Caco-2 (cell line): ENCODE measurements at regions of chr15 and their contacts with region 1.

Region 1: GRCh38 chr15:78565097-78565951 is at the start of gene CHRNA5:
- DNase-seq: peak; percentile 85 to 92
- H3K4me3 ChIP-seq: peak within 1 kb of the TSS; percentile 64
- H3K4me3 Mint-ChIP-seq: peak within 1 kb of the TSS; percentile 91
- H3K27ac Mint-ChIP-seq: peak within 1 kb of the TSS; percentile 80
- H3K4me1 ChIP-seq: no peaks in the 10 kb centered on the region
- H3K4me1 Mint-ChIP-seq: peaks cover 13% of the 10 kb centered on the region
- H3K27me3 ChIP-seq: no peaks in the 10 kb centered on the region
- H3K27me3 Mint-ChIP-seq: peaks cover 2% of the 10 kb centered on the region
- CTCF ChIP-seq: no peak
- total RNA-seq, gene CHRNA5: 12.0 and 12.9 TPM in 2 replicates

Region 2: DNA sequence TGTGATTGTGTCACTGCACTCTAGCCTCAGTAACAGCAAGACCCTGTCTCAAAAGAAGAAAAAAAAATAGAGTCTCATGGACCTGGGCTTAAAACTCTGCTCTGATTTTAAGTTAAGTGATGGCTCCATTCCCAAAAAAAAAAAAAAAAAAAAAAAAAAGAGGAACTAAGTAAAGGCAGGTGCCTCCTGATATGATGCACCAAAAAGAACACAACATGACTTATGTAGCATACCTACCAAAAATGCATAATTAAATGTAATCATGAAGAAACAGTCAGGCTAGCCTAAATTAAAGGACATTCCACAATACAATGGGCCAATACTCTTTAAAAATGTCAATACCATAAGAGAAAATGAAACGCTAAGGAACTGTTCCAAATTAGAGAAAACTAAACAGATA is 132.7 kb before region 1 on chr15:
- CTCF ChIA-PET with region 1: no interaction called
- POLR2A ChIA-PET with region 1: no interaction called
- intact Hi-C with region 1: no loop called
- DNase-seq: no peak
- H3K4me3 ChIP-seq: no peak overlapping the region
- H3K4me3 Mint-ChIP-seq: no peak overlapping the region
- H3K27ac Mint-ChIP-seq: no peak overlapping the region
- H3K4me1 ChIP-seq: no peaks in the 10 kb centered on the region
- H3K4me1 Mint-ChIP-seq: no peaks in the 10 kb centered on the region
- H3K27me3 ChIP-seq: no peaks in the 10 kb centered on the region
- H3K27me3 Mint-ChIP-seq: no peaks in the 10 kb centered on the region
- CTCF ChIP-seq: no peak

Region 3: DNA sequence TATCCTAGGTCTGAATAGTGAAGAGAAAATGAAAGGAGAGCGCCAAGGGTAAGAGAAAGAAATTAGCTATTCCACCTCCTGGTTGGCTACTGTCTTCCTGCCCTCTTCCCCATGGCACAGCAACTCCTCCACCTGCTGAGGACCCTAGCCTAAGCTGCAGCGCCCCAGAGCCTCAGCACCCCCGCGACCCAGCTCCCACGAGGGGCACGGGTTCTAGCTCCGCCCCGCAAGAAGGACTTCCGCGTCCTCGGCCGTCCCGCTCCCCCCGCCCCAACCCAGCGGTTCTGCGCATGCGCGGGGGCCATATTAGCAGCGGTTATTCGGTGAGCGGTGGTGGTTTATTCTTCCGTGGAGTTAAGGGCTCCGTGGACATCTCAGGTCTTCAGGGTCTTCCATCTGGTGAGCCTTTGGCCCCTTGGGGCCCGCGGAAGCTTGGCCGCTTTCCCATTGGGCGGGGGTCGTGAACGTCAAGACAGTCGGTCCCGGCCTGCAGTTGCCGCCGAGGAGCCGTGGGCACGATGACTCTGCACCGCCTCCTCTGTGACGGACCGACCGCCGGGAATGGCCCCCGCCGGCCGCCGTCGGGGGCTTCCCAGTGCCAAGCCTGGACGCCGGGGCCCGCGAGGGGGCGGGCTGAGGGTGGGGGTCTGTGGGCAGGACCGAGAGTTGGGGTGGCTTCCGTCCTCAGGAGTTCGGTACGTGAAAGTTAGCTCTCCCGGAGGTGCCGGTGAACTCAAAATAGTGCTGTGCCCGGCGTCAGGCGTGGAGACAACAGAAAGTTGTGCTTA is 25.0 kb before region 1 on chr15 and contains the start of gene PSMA4:
- CTCF ChIA-PET with region 1: interaction called, 3 read pairs
- POLR2A ChIA-PET with region 1: interaction called, 7 read pairs
- intact Hi-C with region 1: loop called (anchors 1 kb)
- DNase-seq: peak; percentile 86 to 90
- H3K4me3 ChIP-seq: peak within 1 kb of the TSS; percentile 75
- H3K4me3 Mint-ChIP-seq: peak within 1 kb of the TSS; percentile 91
- H3K27ac Mint-ChIP-seq: peak within 1 kb of the TSS; percentile 96
- H3K4me1 ChIP-seq: no peaks in the 10 kb centered on the region
- H3K4me1 Mint-ChIP-seq: peaks cover 14% of the 10 kb centered on the region
- H3K27me3 ChIP-seq: no peaks in the 10 kb centered on the region
- H3K27me3 Mint-ChIP-seq: no peaks in the 10 kb centered on the region
- CTCF ChIP-seq: no peak
- total RNA-seq, gene PSMA4: 276 and 285 TPM in 2 replicates

Region 4: DNA sequence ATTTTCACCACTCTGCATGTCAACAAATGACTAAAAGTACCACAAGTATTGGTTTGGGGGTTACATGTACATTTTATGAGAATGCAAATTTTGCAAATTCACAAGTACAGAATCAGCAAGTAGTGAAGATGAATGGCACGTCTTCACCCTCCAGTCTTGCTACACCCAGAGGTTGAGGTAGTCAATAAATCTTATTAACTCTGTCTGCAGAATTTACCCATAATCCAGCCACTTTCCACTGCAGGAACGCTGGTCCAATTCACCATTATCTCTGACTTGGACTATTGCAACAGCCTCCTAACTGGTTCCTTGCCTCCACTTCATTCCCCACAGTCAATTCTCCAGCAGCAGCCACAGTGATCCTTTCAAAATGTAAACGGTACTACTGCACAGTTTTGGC is 14.5 kb before region 1 on chr15:
- CTCF ChIA-PET with region 1: no interaction called
- POLR2A ChIA-PET with region 1: no interaction called
- intact Hi-C with region 1: no loop called
- DNase-seq: no peak
- H3K4me3 ChIP-seq: no peak overlapping the region
- H3K4me3 Mint-ChIP-seq: no peak overlapping the region
- H3K27ac Mint-ChIP-seq: no peak overlapping the region
- H3K4me1 ChIP-seq: no peaks in the 10 kb centered on the region
- H3K4me1 Mint-ChIP-seq: no peaks in the 10 kb centered on the region
- H3K27me3 ChIP-seq: no peaks in the 10 kb centered on the region
- H3K27me3 Mint-ChIP-seq: no peaks in the 10 kb centered on the region
- CTCF ChIP-seq: no peak

Region 5: DNA sequence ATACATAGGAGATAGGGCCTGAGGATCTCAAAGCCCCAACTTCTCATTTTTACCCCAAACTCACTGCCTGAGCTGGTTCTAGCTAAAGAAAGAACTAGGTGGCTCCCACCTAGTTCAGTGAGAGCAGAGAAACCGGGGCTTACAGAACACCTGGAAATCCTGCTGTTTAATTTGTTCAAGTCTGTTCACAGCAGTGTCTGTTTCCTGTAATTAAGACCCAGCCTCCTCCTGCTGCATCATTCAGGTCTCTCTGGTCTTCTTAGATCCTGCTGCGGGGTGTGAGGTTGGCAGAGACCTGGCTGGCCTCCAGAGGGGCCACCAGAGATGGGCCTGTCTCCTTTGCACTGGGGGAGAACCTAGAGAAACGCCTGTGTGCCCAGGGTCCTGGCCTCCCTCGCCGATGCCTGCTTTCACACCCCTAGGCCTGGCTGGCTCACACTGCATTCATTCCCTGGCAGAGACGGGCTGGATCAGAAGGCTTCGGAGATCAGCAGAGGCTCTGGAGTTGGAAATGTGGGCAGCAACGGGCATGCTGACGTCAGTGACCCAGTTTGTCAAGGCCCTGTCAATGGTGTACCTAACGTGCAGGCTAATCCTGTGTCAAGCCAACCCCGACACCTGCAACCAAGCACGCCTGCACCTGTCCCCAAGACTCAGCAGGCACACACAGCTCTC is 60.4 kb after region 1 on chr15:
- CTCF ChIA-PET with region 1: no interaction called
- POLR2A ChIA-PET with region 1: no interaction called
- intact Hi-C with region 1: no loop called
- DNase-seq: no peak
- H3K4me3 ChIP-seq: no peak overlapping the region
- H3K4me3 Mint-ChIP-seq: no peak overlapping the region
- H3K27ac Mint-ChIP-seq: no peak overlapping the region
- H3K4me1 ChIP-seq: no peaks in the 10 kb centered on the region
- H3K4me1 Mint-ChIP-seq: no peaks in the 10 kb centered on the region
- H3K27me3 ChIP-seq: no peaks in the 10 kb centered on the region; the same call in none of the 2 replicates
- H3K27me3 Mint-ChIP-seq: peaks cover 15% of the 10 kb centered on the region
- CTCF ChIP-seq: no peak